ENCODE measurements at regions of chr11 and their contacts with region 1.

Region 1: DNA sequence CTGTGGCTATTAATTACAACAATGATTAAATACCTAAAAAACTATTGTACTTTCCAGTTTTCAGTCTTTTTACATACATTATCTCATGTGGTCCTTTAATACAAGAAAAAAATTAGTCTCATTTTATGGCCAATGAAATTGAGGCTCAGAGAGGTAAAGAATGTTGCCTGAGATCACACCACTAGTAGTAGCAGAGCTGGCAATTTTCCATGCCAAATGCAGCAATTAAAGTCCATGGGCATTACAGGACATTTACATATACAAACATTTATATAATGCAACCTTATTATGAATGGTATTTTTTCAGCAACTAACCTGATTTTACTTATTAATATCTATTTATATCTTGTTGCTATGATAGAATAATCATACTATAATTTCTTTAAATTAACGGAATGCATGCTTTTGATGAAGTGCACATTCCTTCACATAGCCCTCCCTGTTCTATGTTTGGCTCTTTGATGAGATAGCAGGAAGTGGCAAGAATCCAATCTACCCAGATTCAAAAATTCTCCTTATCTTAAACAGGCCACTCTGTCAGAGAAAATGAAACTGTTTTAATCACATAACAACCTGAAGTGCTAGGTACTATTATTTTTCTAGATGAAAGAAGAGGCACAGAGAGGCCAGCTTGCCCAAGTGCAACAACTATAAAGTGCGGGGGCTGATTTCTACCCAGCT is 120.9 kb upstream of the LDLRAD3 start:
- DNase-seq: no peak
- H3K27ac ChIP-seq: no peak overlapping the region
- CTCF ChIP-seq: no peak

Region 2: GRCh38 chr11:35617687-35618496 is 205.1 kb before region 1 on chr11 and contains the start of gene FJX1:
- CTCF ChIA-PET with region 1: interaction called, 11 read pairs
- POLR2A ChIA-PET with region 1: no interaction called
- DNase-seq: peak; percentile 90
- H3K27ac ChIP-seq: peak within 1 kb of the TSS; percentile 99
- CTCF ChIP-seq: no peak

Region 3: GRCh38 chr11:35893796-35894475 is 71.0 kb after region 1 on chr11:
- CTCF ChIA-PET with region 1: interaction called, 10 read pairs
- POLR2A ChIA-PET with region 1: no interaction called
- DNase-seq: peak; percentile 91
- H3K27ac ChIP-seq: peak overlapping the region; percentile 87
- CTCF ChIP-seq: no peak

Region 4: GRCh38 chr11:36149538-36150242 is 326.7 kb after region 1 on chr11:
- CTCF ChIA-PET with region 1: interaction called, 11 read pairs
- POLR2A ChIA-PET with region 1: no interaction called
- DNase-seq: peak; percentile 99
- H3K27ac ChIP-seq: peak overlapping the region; percentile 95
- CTCF ChIP-seq: no peak; the same call in 1 of the 2 replicates

Region 5: GRCh38 chr11:36265793-36266628 is 443.1 kb after region 1 on chr11:
- CTCF ChIA-PET with region 1: interaction called, 10 read pairs
- POLR2A ChIA-PET with region 1: no interaction called
- DNase-seq: peak; percentile 76
- H3K27ac ChIP-seq: no peak overlapping the region
- CTCF ChIP-seq: peak; percentile 84